Breast epithelium (tissue), 4 donors: ENCODE measurements at regions of chr11 and their contacts with region 1.

Region 1: DNA sequence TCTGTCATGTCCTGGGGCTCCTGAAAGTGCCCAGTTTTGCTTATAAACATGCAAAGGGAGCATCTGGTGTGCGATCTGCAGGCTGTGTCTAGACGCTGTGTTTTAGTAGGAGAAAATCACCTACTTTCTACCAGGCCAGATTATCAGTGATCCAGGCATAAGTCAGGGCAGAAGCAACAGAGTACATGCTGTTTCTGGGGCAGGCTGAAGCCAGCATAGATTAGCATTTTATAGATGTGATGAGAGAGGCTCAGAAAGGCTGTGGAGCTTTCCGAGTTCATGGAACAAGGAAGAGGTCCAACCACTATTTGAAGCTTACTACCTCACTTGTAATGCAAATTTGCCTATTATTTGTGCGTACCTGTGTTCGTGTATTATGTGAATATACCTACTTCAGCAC is 1208.4 kb upstream of the TENM4 start:
- DNase-seq: no peak
- H3K4me3 ChIP-seq: no peak overlapping the region
- H3K27ac ChIP-seq: no peak overlapping the region
- H3K4me1 ChIP-seq: no peaks in the 10 kb centered on the region
- H3K27me3 ChIP-seq: no peaks in the 10 kb centered on the region
- CTCF ChIP-seq: no peak
- POLR2A ChIP-seq: no peak

Region 2: GRCh38 chr11:80532633-80533216 is 116.5 kb before region 1 on chr11:
- intact Hi-C with region 1: no loop called
- DNase-seq: no peak
- H3K4me3 ChIP-seq: no peak overlapping the region
- H3K27ac ChIP-seq: no peak overlapping the region
- H3K4me1 ChIP-seq: no peaks in the 10 kb centered on the region
- H3K27me3 ChIP-seq: no peaks in the 10 kb centered on the region
- CTCF ChIP-seq: no peak
- POLR2A ChIP-seq: no peak

Region 3: DNA sequence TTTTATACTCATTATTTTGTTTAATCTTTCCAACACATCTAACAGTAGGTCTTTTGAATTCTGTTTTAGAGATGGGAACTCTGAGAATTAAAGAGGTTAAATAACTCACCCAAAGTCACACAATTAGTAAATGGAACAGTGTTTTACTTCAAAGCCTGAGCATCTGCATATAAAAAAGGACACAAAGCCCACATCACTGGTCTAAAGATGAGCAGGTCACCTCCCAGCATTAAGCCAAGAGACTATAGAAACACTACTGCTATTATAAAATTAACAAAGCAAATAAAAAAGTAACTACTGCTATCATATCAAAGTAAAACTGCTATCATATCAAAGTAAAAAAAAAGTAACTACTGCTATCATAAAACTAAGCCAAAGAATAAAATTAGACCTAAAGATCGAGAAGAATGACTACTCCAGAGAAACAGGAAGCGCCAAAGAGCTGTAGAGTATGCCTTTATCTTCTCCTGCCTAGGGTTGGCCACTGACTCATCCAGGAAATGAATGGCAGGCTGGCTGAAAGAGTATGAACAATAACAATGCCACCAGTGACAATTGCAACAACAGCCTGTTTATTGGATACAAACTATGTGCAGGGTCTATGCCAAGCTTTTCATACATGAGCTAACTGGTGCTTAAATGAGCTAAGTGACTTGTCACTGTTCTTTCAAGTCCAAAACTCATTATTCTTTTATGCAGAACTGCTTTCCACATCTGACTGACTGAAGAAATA is 55.4 kb before region 1 on chr11:
- intact Hi-C with region 1: loop called (anchors 2 kb)
- DNase-seq: no peak
- H3K4me3 ChIP-seq: no peak overlapping the region
- H3K27ac ChIP-seq: no peak overlapping the region
- H3K4me1 ChIP-seq: no peaks in the 10 kb centered on the region
- H3K27me3 ChIP-seq: no peaks in the 10 kb centered on the region
- CTCF ChIP-seq: no peak
- POLR2A ChIP-seq: no peak